ENCODE measurements at regions of chr6 and their contacts with region 1.

Region 1: GRCh38 chr6:106979427-106979884 is 4.9 kb upstream of the CD24 start:
- H3K4me3 ChIP-seq: no peak overlapping the region
- H3K27ac ChIP-seq: no peak overlapping the region
- H3K4me1 ChIP-seq: no peaks in the 10 kb centered on the region
- CTCF ChIP-seq: peak; percentile 77

Region 2: GRCh38 chr6:106556368-106556960 is 423.0 kb before region 1 on chr6:
- CTCF ChIA-PET with region 1: interaction called, 10 read pairs
- POLR2A ChIA-PET with region 1: no interaction called
- H3K4me3 ChIP-seq: no peak overlapping the region
- H3K27ac ChIP-seq: no peak overlapping the region
- H3K4me1 ChIP-seq: no peaks in the 10 kb centered on the region
- CTCF ChIP-seq: no peak

Region 3: DNA sequence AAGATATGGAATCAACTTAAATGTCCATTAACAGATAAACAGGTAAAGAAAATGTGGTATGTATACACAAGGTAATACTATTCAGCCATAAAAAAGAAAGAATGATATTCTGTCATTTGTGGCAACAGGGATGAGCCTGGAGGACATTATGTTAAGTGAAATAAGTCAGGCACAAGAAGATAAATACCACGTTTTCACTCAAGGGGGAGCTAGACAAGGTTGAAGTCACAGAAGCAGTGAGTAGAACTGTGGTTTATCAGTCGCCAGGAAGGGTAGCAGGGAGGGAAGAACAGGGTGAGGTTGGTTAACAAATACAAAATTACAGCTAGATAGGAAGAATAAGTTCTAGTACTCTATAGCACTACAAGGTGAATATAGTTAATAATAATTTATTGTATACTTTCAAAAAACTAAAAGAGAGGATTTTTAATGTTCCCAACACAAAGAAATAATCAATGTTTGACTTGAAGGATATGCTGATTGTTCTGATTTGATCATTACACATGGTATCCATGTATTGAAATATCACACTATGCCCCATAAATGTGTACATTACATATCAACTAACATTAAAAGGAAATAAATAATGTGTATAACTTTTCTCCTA is 371.3 kb before region 1 on chr6:
- CTCF ChIA-PET with region 1: interaction called, 33 read pairs
- POLR2A ChIA-PET with region 1: no interaction called
- H3K4me3 ChIP-seq: no peak overlapping the region
- H3K27ac ChIP-seq: no peak overlapping the region
- H3K4me1 ChIP-seq: peaks cover 6% of the 10 kb centered on the region; the same call in 1 of the 2 replicates
- CTCF ChIP-seq: no peak

Region 4: GRCh38 chr6:106820412-106820852 is 159.0 kb before region 1 on chr6:
- CTCF ChIA-PET with region 1: interaction called, 10 read pairs
- POLR2A ChIA-PET with region 1: no interaction called
- H3K4me3 ChIP-seq: no peak overlapping the region
- H3K27ac ChIP-seq: no peak overlapping the region
- H3K4me1 ChIP-seq: no peaks in the 10 kb centered on the region
- CTCF ChIP-seq: no peak

Region 5: GRCh38 chr6:107021446-107022185 is 42.2 kb after region 1 on chr6:
- CTCF ChIA-PET with region 1: no interaction called
- POLR2A ChIA-PET with region 1: no interaction called
- H3K4me3 ChIP-seq: no peak overlapping the region
- H3K27ac ChIP-seq: no peak overlapping the region
- H3K4me1 ChIP-seq: no peaks in the 10 kb centered on the region
- CTCF ChIP-seq: no peak

Region 6: GRCh38 chr6:107304421-107305025 is 325.1 kb after region 1 on chr6:
- CTCF ChIA-PET with region 1: no interaction called
- POLR2A ChIA-PET with region 1: no interaction called
- H3K4me3 ChIP-seq: no peak overlapping the region
- H3K27ac ChIP-seq: no peak overlapping the region
- H3K4me1 ChIP-seq: no peaks in the 10 kb centered on the region
- CTCF ChIP-seq: no peak

Region 7: GRCh38 chr6:107361753-107362604 is 382.5 kb after region 1 on chr6:
- CTCF ChIA-PET with region 1: no interaction called
- POLR2A ChIA-PET with region 1: no interaction called
- H3K4me3 ChIP-seq: no peak overlapping the region
- H3K27ac ChIP-seq: no peak overlapping the region
- H3K4me1 ChIP-seq: no peaks in the 10 kb centered on the region
- CTCF ChIP-seq: no peak

Measured in HEK293 (cell line).